Psoas muscle (tissue), 8 donors: ENCODE measurements at regions of chr20 and their contacts with region 1.

Region 1: GRCh38 chr20:43515628-43516027 is 8.1 kb downstream of the L3MBTL1 start:
- DNase-seq: no peak
- ATAC-seq: no peak
- H3K4me3 ChIP-seq: no peak overlapping the region
- H3K27ac ChIP-seq: no peak overlapping the region
- H3K4me1 ChIP-seq: no peaks in the 10 kb centered on the region
- H3K27me3 ChIP-seq: no peaks in the 10 kb centered on the region
- CTCF ChIP-seq: no peak

Region 2: DNA sequence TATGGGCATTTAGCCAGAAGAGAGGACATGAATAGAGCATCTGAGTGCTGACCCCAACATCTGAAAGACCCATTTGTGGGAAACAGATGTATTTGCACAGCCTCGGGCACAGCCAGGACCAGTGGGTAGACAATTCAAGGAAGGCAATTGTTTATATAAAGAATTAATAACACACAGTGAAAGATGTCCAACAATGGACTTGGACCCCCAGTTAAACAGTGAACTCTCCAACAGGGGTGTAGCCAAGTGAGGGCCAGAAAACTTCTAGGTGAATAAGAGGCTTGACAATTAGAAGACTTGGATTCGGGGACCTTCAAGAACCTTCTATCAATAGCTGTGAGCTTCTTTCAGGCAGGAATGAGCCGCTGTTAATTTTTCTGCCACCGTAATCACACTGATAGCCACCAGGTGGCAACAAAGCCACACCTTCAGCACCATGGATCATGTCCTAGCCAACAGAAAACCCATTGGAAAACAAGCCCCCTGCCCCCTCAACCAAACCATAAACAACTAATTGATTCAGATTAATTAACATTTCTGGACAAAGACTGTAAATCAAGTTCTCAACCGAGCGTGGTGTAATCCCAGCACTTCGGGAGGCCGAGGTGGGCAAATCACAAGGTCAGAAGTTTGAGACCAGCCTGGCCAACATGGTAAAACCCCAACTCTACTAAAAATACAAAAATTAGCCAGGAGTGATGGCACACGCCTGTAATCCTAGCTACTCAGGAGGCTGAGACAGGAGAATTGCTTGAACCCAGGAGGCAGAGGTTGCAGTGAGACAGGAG is 66.7 kb before region 1 on chr20:
- intact Hi-C with region 1: loop called in 1 of 2 experiments (anchors 5 kb)
- DNase-seq: no peak
- ATAC-seq: peak; percentile 48 to 81 (median 52)
- H3K4me3 ChIP-seq: no peak overlapping the region
- H3K27ac ChIP-seq: no peak overlapping the region
- H3K4me1 ChIP-seq: peaks cover 4% of the 10 kb centered on the region
- H3K27me3 ChIP-seq: peaks cover 0 to 5% (median 0%) of the 10 kb centered on the region in 3 donors
- CTCF ChIP-seq: peak; percentile 62

Region 3: GRCh38 chr20:43579861-43580793 is 64.5 kb after region 1 on chr20:
- intact Hi-C with region 1: no loop called
- DNase-seq: no peak
- ATAC-seq: no peak
- H3K4me3 ChIP-seq: no peak overlapping the region
- H3K27ac ChIP-seq: no peak overlapping the region
- H3K4me1 ChIP-seq: no peaks in the 10 kb centered on the region
- H3K27me3 ChIP-seq: no peaks in the 10 kb centered on the region
- CTCF ChIP-seq: no peak